Tibial artery (tissue), 4 donors: ENCODE measurements at regions of chr3 and their contacts with region 1.

Region 1: DNA sequence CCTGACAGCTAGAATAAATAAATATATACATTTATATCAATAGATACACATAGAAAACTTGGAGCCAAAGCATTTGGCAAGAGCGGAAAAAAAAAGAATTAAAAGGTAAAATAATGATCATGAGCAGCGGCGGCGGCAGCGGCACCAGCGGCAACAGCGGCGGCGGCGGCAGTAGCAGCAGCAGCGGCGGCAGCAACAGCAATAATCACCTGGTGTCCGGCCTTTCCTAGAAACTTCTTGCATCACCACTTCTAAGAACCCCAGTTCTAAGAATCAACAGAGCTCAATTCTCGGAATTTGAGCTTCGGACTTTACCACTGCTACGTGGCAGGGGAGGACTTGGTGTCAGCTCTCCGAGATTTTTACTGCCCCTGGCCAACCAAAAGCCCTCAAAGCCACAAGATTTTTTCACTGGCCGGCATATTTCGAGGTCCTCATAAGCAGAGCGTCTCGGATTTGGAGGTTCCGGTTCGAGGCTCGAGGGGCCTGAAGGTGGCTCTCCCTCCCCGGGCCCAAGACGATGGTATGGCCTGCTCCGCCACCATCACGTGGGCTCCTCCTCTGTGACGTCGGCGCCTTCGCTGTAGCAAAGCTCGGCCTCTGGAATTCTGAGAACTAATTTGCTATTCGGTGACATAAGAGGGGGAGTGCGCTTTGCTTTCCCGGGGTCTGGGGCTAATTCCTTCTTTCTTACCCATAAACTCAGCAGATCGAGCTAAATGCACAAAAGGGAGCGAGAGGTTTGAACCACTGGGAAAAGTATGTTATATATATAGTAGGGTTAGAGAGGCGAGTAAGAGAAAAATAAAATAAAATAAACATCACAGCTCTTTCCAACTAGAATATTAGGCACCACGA is at the start of gene BCL6:
- DNase-seq: peak; percentile 94 to 96
- H3K4me3 ChIP-seq: peak within 1 kb of the TSS; percentile 75 to 78
- H3K27ac ChIP-seq: peak within 1 kb of the TSS; percentile 93 to 99
- H3K4me1 ChIP-seq: peaks cover 0 to 38% (median 21%) of the 10 kb centered on the region in 4 donors
- H3K27me3 ChIP-seq: no peaks in the 10 kb centered on the region
- CTCF ChIP-seq: no peak

Region 2: GRCh38 chr3:187878776-187879518 is 133.5 kb after region 1 on chr3:
- intact Hi-C with region 1: no loop called
- DNase-seq: no peak
- H3K4me3 ChIP-seq: no peak overlapping the region
- H3K27ac ChIP-seq: no peak overlapping the region
- H3K4me1 ChIP-seq: no peaks in the 10 kb centered on the region
- H3K27me3 ChIP-seq: no peaks in the 10 kb centered on the region
- CTCF ChIP-seq: no peak

Region 3: DNA sequence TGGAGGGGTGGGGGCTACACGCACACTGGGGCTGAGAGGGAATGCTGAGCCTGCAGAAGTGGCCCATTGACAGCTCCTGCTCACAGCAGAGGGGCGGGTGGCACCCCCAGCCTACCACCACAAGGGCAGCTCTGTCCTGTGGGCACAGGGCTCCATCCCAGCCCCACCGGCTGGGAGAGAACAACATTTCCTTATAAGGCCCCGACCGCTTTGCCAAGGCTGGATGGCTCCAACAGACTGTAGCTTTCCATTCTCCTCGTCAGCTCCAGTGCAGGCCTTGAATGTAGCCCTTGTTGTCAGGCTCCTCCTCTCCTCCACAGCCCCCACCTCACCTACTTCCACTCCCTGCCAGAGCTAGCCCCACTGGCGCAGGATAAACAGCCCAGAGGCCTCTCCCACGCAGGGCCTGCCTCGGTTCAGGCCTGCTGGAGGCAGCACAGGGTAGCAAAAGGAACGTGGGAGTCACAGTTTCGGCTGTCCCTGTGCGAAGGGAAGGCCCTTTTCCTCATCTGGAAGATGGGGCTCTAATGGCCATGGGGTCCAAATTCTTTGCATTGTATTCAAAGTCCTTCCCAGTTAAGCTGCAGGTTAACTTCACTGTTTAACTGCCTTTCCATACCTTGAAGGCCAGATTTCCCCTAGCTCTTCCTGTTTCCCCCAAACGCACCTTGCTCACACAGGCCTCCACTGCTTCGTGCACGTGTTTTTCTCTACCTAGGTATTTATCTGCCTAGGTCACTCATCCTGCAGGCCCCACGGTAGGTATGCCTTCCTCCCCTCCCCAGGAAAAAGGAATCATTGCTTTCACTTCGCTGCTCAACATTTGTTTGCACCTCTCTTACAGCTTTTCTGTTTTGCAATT is 307.0 kb after region 1 on chr3:
- intact Hi-C with region 1: loop called (anchors 5 kb)
- DNase-seq: peak; percentile 93 to 98
- H3K4me3 ChIP-seq: peak overlapping the region; percentile 39 to 43
- H3K27ac ChIP-seq: peak overlapping the region; percentile 91 to 94
- H3K4me1 ChIP-seq: peaks cover 11 to 52% (median 41%) of the 10 kb centered on the region in 4 donors
- H3K27me3 ChIP-seq: no peaks in the 10 kb centered on the region
- CTCF ChIP-seq: peak; percentile 62 to 67

Region 4: GRCh38 chr3:188212308-188212969 is 467.0 kb after region 1 on chr3:
- intact Hi-C with region 1: loop called (anchors 10 kb)
- DNase-seq: peak; percentile 43 to 79
- H3K4me3 ChIP-seq: peak overlapping the region; percentile 50 to 54
- H3K27ac ChIP-seq: peak overlapping the region; percentile 87 to 94
- H3K4me1 ChIP-seq: peaks cover 0 to 96% (median 42%) of the 10 kb centered on the region in 4 donors
- H3K27me3 ChIP-seq: no peaks in the 10 kb centered on the region
- CTCF ChIP-seq: no peak

Region 5: GRCh38 chr3:188458756-188459155 is 713.3 kb after region 1 on chr3:
- intact Hi-C with region 1: no loop called
- DNase-seq: no peak
- H3K4me3 ChIP-seq: no peak overlapping the region
- H3K27ac ChIP-seq: peak overlapping the region in 1 of 2 donors; percentile 1
- H3K4me1 ChIP-seq: peaks cover 0 to 85% (median 11%) of the 10 kb centered on the region in 4 donors
- H3K27me3 ChIP-seq: no peaks in the 10 kb centered on the region
- CTCF ChIP-seq: no peak

Region 6: GRCh38 chr3:188607805-188608315 is 862.4 kb after region 1 on chr3:
- intact Hi-C with region 1: loop called (anchors 10 kb)
- DNase-seq: no peak
- H3K4me3 ChIP-seq: no peak overlapping the region
- H3K27ac ChIP-seq: peak overlapping the region; percentile 52 to 77
- H3K4me1 ChIP-seq: peaks cover 0 to 81% (median 27%) of the 10 kb centered on the region in 4 donors
- H3K27me3 ChIP-seq: no peaks in the 10 kb centered on the region
- CTCF ChIP-seq: no peak